Activated T-helper 2 cell treated with anti-CD3 and anti-CD28 coated beads, Interferon-gamma antibody, Interleukin-2, Interleukin-4, amounts not matched to agents 10 μg/mL and 5 μg/mL and 100 μg/mL, durations not matched to agents 14 hours and 24 hours and 36 hours (primary cell): ENCODE measurements at regions of chr1 and their contacts with region 1.

Region 1: GRCh38 chr1:243850452-243851256 is 611 bp upstream of the AKT3 start:
- DNase-seq: peak; percentile 73
- H3K4me3 Mint-ChIP-seq: peak overlapping the region; percentile 81
- H3K27ac Mint-ChIP-seq: peak overlapping the region; percentile 84
- H3K4me1 Mint-ChIP-seq: peaks cover 18% of the 10 kb centered on the region
- H3K27me3 Mint-ChIP-seq: peaks cover 39% of the 10 kb centered on the region

Region 2: DNA sequence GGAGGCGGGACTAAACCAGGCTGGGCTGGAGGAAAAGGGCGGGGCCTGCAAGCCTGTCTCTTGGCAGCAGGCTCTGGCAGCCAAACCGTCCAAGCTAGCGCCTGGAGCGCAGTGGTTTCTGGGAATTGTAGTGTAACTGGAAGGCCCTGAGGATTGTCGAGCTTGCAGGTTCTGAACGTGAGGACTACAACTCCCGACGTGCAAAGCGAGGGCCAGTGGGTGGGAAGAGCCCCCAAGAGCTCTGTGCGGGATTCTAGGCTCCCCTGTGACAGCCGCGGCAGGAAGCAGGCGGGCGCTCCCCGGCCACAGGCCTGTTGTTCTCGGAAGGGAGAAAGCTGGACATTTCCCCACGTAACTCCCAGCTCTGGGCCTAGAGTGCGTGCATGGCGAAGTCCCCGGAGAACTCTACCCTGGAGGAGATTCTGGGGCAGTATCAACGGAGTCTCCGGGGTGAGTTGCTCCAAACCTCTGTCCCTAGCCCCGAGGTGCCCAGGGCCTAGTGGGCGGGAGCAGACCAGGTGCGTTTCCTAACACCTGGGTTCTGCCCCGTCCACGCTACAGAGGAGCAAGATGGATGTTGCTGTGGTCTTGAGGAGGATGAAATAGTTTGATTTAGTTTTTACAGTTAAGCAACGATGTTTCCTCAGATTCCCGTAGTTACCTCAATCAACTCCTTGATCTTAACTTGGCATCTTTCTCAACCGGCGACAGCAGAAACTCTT is 594.7 kb before region 1 on chr1 and contains the start of gene SDCCAG8:
- intact Hi-C with region 1: loop called (anchors 1 kb)
- DNase-seq: peak; percentile 94
- H3K4me3 Mint-ChIP-seq: peak within 1 kb of the TSS; percentile 97
- H3K27ac Mint-ChIP-seq: peak within 1 kb of the TSS; percentile 100
- H3K4me1 Mint-ChIP-seq: peaks cover 20% of the 10 kb centered on the region
- H3K27me3 Mint-ChIP-seq: no peaks in the 10 kb centered on the region
- total RNA-seq, gene SDCCAG8: 18.1 and 25.4 TPM in 2 replicates

Region 3: DNA sequence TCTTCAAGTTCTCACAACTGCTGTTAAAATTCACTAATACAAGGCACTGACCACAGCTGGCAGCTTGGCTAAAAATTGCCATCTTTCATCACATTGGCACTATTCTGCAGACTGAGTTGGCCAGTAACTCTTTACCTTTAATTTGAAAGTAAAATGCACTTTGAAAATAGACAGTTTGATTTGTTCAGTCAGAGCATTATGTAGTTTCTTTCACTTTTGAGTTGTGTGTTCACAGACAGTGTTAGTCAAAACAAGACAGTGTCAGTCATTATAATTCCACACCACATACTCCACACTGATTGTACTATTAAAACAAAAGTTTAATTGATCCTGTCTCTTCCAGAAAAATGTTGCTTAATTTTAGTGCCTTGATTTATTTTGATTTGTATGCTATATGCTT is 434.2 kb before region 1 on chr1:
- intact Hi-C with region 1: loop called (anchors 5 kb)
- DNase-seq: no peak
- H3K4me3 Mint-ChIP-seq: peak overlapping the region; percentile 40
- H3K27ac Mint-ChIP-seq: peak overlapping the region; percentile 65
- H3K4me1 Mint-ChIP-seq: peaks cover 63% of the 10 kb centered on the region
- H3K27me3 Mint-ChIP-seq: no peaks in the 10 kb centered on the region

Region 4: DNA sequence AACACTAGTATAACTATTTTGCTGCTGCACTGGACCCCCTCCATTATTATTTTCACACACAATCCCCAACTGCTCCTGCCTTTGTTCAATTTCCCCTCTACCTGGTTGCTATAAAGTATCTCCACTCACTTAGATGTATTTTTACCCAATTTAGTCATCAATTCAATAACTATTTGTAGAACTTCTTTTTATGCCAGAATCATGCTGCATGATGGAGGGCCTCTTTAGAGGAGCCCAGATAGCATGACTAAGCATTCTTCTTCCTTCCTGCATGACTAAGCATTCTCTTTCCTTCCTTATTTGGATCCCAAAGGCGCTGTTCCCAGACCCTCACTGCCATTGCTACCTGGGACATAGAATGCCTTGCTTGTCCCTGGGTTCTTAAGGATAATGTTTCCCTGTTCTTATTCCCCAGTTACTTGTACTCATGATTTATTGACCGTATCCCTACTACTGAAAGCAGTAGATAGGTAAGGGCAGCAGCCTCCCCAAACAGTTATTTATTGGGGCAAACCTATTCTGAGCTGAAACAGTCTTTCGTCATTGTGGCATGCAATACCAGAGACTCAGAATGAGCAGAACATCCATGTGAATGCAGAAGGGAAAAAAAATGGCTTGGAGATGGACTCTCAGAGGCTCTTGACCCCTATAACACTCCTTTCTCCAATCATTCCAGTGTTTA is 88.7 kb after region 1 on chr1:
- intact Hi-C with region 1: loop called (anchors 5 kb)
- DNase-seq: no peak
- H3K4me3 Mint-ChIP-seq: no peak overlapping the region
- H3K27ac Mint-ChIP-seq: no peak overlapping the region
- H3K4me1 Mint-ChIP-seq: peaks cover 15% of the 10 kb centered on the region
- H3K27me3 Mint-ChIP-seq: peaks cover 4% of the 10 kb centered on the region

Region 5: GRCh38 chr1:244092293-244092963 is 241.8 kb after region 1 on chr1:
- intact Hi-C with region 1: no loop called
- DNase-seq: no peak
- H3K4me3 Mint-ChIP-seq: no peak overlapping the region
- H3K27ac Mint-ChIP-seq: no peak overlapping the region
- H3K4me1 Mint-ChIP-seq: no peaks in the 10 kb centered on the region
- H3K27me3 Mint-ChIP-seq: peaks cover 2% of the 10 kb centered on the region

Region 6: GRCh38 chr1:244296447-244296846 is 445.8 kb after region 1 on chr1:
- intact Hi-C with region 1: loop called (anchors 10 kb)
- DNase-seq: no peak
- H3K4me3 Mint-ChIP-seq: no peak overlapping the region
- H3K27ac Mint-ChIP-seq: no peak overlapping the region
- H3K4me1 Mint-ChIP-seq: peaks cover 6% of the 10 kb centered on the region
- H3K27me3 Mint-ChIP-seq: peaks cover 2% of the 10 kb centered on the region

Region 7: DNA sequence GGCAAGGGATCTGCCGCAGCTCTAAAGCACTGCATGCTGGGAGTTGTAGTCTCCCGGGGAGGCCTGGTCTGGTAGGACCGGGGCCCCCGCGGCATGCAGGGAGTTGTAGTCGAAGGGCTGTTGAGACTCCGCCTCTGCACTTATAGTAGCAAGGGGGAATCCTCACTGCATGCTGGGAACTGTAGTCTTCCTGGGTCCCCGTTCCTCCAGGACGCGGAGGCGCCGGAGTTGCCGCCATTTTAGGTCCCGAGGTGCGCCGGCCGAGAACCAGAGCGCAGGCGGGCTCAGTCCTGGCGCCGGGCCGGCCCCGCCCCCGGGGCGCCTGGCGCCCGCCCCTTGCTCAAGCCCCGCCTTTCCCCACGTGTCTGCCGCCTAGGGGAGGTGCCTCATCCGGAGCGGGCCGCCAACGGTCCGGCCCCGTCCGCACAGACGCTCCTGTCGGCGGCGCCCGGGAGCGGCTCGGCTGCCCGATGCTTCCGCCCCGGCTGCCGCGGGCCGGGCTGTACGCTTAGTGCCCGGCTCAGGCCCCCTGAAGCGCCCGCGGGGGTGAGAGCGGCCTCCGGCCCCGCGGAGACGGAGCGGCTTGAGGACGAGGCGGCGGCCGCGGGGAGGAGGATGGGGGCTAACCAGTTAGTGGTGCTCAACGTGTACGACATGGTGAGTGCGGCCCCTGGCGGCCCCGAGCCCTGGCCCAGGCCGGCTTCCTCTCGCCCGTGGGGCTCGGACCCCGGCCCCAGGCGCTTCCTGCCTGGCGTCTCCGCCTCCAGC is 802.2 kb after region 1 on chr1 and contains the start of gene DESI2:
- intact Hi-C with region 1: loop called (anchors 2 kb)
- DNase-seq: peak; percentile 98
- H3K4me3 Mint-ChIP-seq: peak within 1 kb of the TSS; percentile 82
- H3K27ac Mint-ChIP-seq: peak within 1 kb of the TSS; percentile 71
- H3K4me1 Mint-ChIP-seq: peaks cover 20% of the 10 kb centered on the region
- H3K27me3 Mint-ChIP-seq: peaks cover 1% of the 10 kb centered on the region
- total RNA-seq, gene DESI2: 27.4 TPM in 2 replicates